Psoas muscle (tissue), 8 donors: ENCODE measurements at regions of chr12 and their contacts with region 1.

Region 1: GRCh38 chr12:17866802-17867201 is 223.2 kb downstream of the RERGL start:
- DNase-seq: no peak
- ATAC-seq: no peak
- H3K4me3 ChIP-seq: no peak overlapping the region
- H3K27ac ChIP-seq: no peak overlapping the region
- H3K4me1 ChIP-seq: no peaks in the 10 kb centered on the region
- H3K27me3 ChIP-seq: no peaks in the 10 kb centered on the region
- CTCF ChIP-seq: no peak

Region 2: GRCh38 chr12:17778242-17778641 is 88.6 kb before region 1 on chr12:
- intact Hi-C with region 1: loop called (anchors 2 kb)
- DNase-seq: no peak
- ATAC-seq: no peak
- H3K4me3 ChIP-seq: no peak overlapping the region
- H3K27ac ChIP-seq: no peak overlapping the region
- H3K4me1 ChIP-seq: no peaks in the 10 kb centered on the region
- H3K27me3 ChIP-seq: no peaks in the 10 kb centered on the region
- CTCF ChIP-seq: no peak

Region 3: GRCh38 chr12:17884581-17884980 is 17.8 kb after region 1 on chr12:
- intact Hi-C with region 1: no loop called
- DNase-seq: no peak
- ATAC-seq: no peak
- H3K4me3 ChIP-seq: no peak overlapping the region
- H3K27ac ChIP-seq: no peak overlapping the region
- H3K4me1 ChIP-seq: no peaks in the 10 kb centered on the region
- H3K27me3 ChIP-seq: no peaks in the 10 kb centered on the region
- CTCF ChIP-seq: no peak